ENCODE measurements at regions of chr16 and their contacts with region 1.

Region 1: GRCh38 chr16:88785106-88785924 is at the start of gene PIEZO1:
- DNase-seq: peak; percentile 55
- H3K4me3 Mint-ChIP-seq: peak within 1 kb of the TSS; percentile 68
- H3K27ac Mint-ChIP-seq: peak within 1 kb of the TSS; percentile 83
- H3K4me1 Mint-ChIP-seq: peaks cover 25% of the 10 kb centered on the region
- H3K27me3 Mint-ChIP-seq: no peaks in the 10 kb centered on the region
- CTCF ChIP-seq: peak; percentile 92
- total RNA-seq, gene PIEZO1: 193 and 195 TPM in 2 replicates

Region 2: GRCh38 chr16:88743693-88744576 is 41.4 kb before region 1 on chr16:
- CTCF ChIA-PET with region 1: interaction called, 7 read pairs
- POLR2A ChIA-PET with region 1: interaction called, 3 read pairs
- intact Hi-C with region 1: loop called (anchors 2 kb)
- DNase-seq: peak; percentile 64
- H3K4me3 Mint-ChIP-seq: no peak overlapping the region
- H3K27ac Mint-ChIP-seq: no peak overlapping the region
- H3K4me1 Mint-ChIP-seq: no peaks in the 10 kb centered on the region
- H3K27me3 Mint-ChIP-seq: no peaks in the 10 kb centered on the region
- CTCF ChIP-seq: peak; percentile 80

Region 3: GRCh38 chr16:88754912-88755744 is 30.2 kb before region 1 on chr16:
- CTCF ChIA-PET with region 1: interaction called, 14 read pairs
- POLR2A ChIA-PET with region 1: interaction called, 13 read pairs
- intact Hi-C with region 1: loop called (anchors 1 kb)
- DNase-seq: peak; percentile 75
- H3K4me3 Mint-ChIP-seq: peak overlapping the region; percentile 36
- H3K27ac Mint-ChIP-seq: peak overlapping the region; percentile 23
- H3K4me1 Mint-ChIP-seq: peaks cover 8% of the 10 kb centered on the region
- H3K27me3 Mint-ChIP-seq: no peaks in the 10 kb centered on the region
- CTCF ChIP-seq: no peak

Region 4: DNA sequence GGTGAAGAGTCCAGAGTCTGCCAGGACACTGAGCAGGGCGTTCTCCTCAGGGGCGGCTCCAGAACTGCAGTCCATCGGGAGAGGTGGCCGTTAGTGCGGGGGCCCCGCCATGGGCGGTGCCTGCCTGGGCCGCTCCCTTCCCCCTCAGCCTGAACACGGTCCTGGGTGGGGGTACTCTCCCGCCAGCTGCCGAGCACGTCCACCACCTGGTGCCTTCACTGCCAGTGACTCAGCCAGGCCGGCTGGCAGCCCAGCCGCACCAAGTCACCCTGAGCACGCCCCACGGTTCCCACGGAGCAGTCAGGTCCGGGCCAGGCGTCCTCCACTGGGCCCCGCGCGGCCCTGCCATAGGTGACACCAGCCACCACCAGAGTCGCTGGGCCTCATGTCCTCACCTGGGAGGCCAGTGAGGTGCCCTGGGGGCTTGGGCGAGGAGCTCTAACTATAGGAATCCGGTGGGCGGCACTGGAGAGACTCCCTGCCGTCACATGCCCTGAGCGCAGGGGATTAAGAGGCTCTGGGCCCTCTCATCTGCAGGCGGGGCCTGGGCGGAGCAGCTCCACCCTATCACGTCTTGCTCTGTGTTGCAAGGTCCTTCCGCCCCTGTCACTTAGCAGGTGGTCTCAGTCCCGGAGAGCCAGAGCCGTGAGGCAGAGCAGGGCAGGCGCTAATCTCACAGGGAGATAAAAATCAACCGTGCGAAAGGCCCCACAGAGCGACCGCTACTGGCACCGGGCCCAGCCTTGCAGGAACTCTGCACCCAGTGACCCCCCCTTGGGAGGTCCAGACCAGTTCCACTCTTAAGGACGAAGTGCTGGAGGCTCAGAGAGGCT is 14.6 kb before region 1 on chr16:
- CTCF ChIA-PET with region 1: interaction called, 10 read pairs
- POLR2A ChIA-PET with region 1: interaction called, 57 read pairs
- intact Hi-C with region 1: no loop called
- DNase-seq: peak; percentile 82
- H3K4me3 Mint-ChIP-seq: peak overlapping the region; percentile 57
- H3K27ac Mint-ChIP-seq: peak overlapping the region; percentile 61
- H3K4me1 Mint-ChIP-seq: peaks cover 32% of the 10 kb centered on the region
- H3K27me3 Mint-ChIP-seq: no peaks in the 10 kb centered on the region
- CTCF ChIP-seq: no peak

Region 5: DNA sequence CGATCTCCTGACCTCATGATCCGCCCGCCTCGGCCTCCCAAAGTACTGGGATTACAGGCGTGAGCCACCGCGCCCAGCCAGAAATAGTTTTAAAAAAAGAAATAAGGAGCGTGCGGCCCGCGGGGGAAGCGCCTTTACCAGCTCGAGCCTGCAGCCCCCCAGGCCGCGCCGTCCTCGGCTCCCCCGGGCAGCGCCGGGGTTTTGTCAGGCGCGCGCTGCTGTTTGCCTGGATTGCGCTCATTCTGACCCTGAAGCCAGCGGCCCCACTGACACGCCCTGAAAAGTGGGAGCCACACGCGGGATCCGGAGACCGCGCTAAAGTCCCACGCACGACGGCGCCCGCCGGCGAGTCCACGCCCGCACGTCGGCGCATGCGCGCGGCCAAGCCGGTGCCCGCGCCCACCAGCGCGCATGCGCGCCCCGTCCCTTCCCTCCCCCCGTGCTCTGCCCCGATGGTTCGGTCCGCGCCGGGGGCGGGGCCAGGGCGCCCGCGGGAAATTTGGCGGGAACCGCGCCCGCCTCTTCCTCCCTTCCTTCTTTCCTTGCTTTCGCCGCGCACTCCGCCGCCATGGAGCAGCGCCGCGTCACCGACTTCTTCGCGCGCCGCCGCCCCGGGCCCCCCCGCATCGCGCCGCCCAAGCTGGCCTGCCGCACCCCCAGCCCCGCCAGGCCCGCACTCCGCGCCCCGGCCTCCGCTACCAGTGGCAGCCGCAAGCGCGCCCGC is 18.1 kb after region 1 on chr16 and contains the start of gene CDT1:
- CTCF ChIA-PET with region 1: no interaction called
- POLR2A ChIA-PET with region 1: interaction called, 24 read pairs
- intact Hi-C with region 1: no loop called
- DNase-seq: peak; percentile 80
- H3K4me3 Mint-ChIP-seq: peak within 1 kb of the TSS; percentile 74
- H3K27ac Mint-ChIP-seq: no peak within 1 kb of the TSS
- H3K4me1 Mint-ChIP-seq: no peaks in the 10 kb centered on the region
- H3K27me3 Mint-ChIP-seq: no peaks in the 10 kb centered on the region
- CTCF ChIP-seq: no peak
- total RNA-seq, gene CDT1: 5.3 and 16.6 TPM in 2 replicates

Region 6: DNA sequence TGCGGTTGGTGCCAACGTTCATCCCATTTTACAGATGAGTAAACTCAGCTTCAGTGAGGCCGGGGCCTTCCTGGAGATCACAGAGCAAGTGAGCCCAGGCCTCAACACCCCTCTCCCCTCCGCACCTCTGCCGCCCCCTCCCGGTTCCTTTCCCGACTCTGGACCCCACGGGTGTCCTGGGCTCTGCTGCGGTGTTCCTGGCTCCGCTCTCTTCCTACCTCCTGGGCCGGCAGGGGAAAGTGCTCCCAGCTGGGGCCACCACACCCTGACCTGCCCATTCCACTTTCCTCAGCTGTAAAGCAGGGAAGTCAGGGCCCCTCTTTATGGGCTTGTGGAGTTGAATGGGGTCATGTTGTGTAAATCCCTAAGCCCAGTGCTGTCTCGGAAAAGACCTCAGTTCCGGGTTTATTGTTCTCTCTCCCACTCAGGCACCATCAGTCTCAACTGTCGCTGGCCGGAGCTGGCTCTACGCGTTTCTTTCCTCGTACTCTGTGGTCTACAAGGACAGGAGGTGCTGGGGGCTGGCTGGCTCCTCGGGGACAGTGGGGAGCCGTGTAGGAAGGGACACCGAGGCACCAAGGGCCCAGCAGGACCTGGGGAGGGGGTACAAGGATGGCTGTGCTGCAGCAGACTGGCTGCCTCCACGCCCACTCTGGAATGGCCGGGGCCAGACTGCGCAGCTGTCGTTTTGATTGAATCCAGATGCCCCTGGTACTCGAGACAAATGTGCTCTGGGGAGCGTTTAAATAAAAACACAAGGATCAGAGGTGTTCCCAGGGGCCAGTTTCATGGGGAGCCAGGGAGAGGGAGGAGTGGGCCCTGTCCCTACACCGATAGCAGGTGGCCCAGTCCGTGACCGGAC is 286.6 kb after region 1 on chr16:
- CTCF ChIA-PET with region 1: no interaction called
- POLR2A ChIA-PET with region 1: no interaction called
- intact Hi-C with region 1: no loop called
- DNase-seq: no peak
- H3K4me3 Mint-ChIP-seq: no peak overlapping the region
- H3K27ac Mint-ChIP-seq: no peak overlapping the region
- H3K4me1 Mint-ChIP-seq: no peaks in the 10 kb centered on the region
- H3K27me3 Mint-ChIP-seq: peaks cover 10% of the 10 kb centered on the region
- CTCF ChIP-seq: no peak